GM18951 (cell line): ENCODE measurements at regions of chr15 and their contacts with region 1.

Region 1: GRCh38 chr15:94403331-94403730 is 172.0 kb downstream of the MCTP2 start:
- POLR2A ChIP-seq: no peak

Region 2: GRCh38 chr15:95291898-95292472 is 888.7 kb after region 1 on chr15:
- in situ Hi-C with region 1: loop called (anchors 10 kb)
- POLR2A ChIP-seq: no peak